ENCODE measurements at regions of chr12 and their contacts with region 1.

Region 1: DNA sequence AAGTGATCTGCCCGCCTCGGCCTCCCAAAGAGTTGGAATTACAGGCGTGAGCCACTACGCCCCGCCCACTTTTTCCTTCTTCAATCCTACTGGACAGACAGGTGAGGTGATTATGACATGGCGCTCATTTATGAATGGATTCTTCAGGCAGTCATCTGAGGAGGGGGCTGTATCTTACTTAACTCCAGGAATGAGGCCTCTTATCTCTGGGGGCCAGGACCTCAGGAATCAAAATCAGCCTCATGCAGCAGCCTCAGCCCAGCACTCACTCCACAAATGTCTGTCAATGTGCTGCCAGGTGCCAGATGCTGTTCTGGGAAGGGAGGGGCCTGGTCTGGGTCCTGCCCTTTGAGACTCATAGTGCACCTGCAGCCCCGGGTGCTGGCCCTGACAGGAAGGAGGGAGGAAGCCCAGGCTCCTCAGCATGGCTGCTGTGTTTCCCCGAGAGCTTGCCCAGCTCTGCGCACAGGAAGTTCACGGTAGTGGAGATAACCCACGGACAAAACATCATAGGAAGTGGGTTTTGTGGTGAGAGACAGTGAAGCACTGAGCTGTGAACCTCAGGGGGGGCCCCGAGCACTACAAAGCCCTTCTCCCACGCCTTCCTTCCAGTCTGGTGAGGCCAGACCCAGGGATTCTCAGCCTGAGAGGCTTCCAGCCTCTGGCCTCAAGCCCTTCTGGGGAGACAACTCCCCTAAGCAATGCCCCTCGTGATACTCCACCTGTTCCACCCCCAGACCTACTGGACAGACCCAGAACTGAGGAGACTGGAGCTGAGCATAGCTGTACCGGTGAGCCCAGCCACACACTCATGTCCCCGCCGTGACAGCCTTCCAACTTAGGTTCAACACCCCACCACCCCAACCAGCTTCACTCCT is 22.3 kb downstream of the GALNT6 start:
- DNase-seq: peak; percentile 95
- ATAC-seq: peak; percentile 99
- H3K4me3 ChIP-seq: no peak overlapping the region
- H3K27ac ChIP-seq: peak overlapping the region; percentile 87
- H3K4me1 ChIP-seq: peaks cover 21% of the 10 kb centered on the region
- H3K27me3 ChIP-seq: no peaks in the 10 kb centered on the region
- CTCF ChIP-seq: no peak
- EP300 ChIP-seq: peak; percentile 82 to 91
- POLR2A ChIP-seq: peak; percentile 59
- RAD21 ChIP-seq: no peak

Region 2: GRCh38 chr12:51391283-51392162 is 22.6 kb after region 1 on chr12 and contains the start of gene GALNT6:
- CTCF ChIA-PET with region 1: interaction called, 8 read pairs
- POLR2A ChIA-PET with region 1: interaction called, 28 read pairs
- RAD21 ChIA-PET with region 1: interaction called, 19 read pairs
- SMC1A ChIA-PET with region 1: interaction called, 14 read pairs
- in situ Hi-C with region 1: no loop called
- intact Hi-C with region 1: loop called (anchors 1 kb)
- DNase-seq: no peak
- ATAC-seq: peak; percentile 73
- H3K4me3 ChIP-seq: peak within 1 kb of the TSS; percentile 96
- H3K27ac ChIP-seq: peak within 1 kb of the TSS; percentile 74
- H3K4me1 ChIP-seq: peaks cover 51% of the 10 kb centered on the region
- H3K27me3 ChIP-seq: no peaks in the 10 kb centered on the region
- CTCF ChIP-seq: no peak
- EP300 ChIP-seq: no peak
- POLR2A ChIP-seq: peak; percentile 85
- RAD21 ChIP-seq: no peak
- polyA plus RNA-seq, gene GALNT6: 6.6 to 11.4 TPM

Region 3: GRCh38 chr12:52372216-52373154 is 1003.6 kb after region 1 on chr12:
- CTCF ChIA-PET with region 1: no interaction called
- POLR2A ChIA-PET with region 1: no interaction called
- RAD21 ChIA-PET with region 1: no interaction called
- SMC1A ChIA-PET with region 1: no interaction called
- in situ Hi-C with region 1: no loop called
- intact Hi-C with region 1: no loop called
- DNase-seq: no peak
- ATAC-seq: peak; percentile 85
- H3K4me3 ChIP-seq: no peak overlapping the region
- H3K27ac ChIP-seq: no peak overlapping the region
- H3K4me1 ChIP-seq: no peaks in the 10 kb centered on the region
- H3K27me3 ChIP-seq: peaks cover 3 to 4% of the 10 kb centered on the region in 2 experiments; a peak in 2 of 4 replicates
- CTCF ChIP-seq: peak; percentile 71 to 83 (median 79)
- EP300 ChIP-seq: no peak
- POLR2A ChIP-seq: no peak
- RAD21 ChIP-seq: peak; percentile 82